AG04449 (cell line): ENCODE measurements at regions of chr16 and their contacts with region 1.

Region 1: DNA sequence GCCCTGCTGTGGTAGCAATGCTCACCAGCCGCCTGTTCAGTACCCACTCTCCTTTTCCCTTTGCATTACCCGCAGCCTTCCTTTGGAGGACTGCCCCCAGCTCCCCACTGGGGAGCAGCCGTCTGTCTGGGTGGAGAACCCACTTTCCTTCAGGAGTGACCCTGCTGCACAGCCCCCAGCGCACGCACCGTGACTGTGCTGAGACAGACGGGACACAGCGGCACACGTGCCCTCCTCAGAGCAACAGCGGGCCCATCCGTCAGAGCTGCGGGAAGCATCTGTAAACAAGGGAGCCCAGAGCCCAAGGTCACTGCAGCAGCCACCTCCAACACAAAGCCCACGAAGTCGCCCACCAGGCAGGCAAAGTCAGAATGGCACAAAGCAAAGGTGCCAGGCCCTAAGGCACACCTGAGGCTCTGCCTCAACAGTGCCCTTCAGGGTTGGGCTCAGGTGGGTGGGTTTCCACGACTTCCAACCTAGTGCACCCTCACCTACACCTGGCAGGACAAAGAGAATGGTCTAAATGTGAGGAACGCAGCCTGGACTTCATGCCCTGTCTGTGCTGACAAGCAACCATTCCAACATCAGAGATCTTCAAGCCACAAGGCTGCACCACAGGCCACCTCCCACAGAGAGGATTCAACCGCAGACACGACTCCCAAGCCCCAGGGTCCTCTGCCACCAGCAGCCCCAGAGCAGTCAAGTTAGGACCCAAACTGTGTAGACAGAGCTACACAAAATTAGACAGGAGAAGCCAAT is 9.9 kb downstream of the AXIN1 start:
- DNase-seq: no peak
- H3K4me3 ChIP-seq: no peak overlapping the region
- CTCF ChIP-seq: no peak

Region 2: DNA sequence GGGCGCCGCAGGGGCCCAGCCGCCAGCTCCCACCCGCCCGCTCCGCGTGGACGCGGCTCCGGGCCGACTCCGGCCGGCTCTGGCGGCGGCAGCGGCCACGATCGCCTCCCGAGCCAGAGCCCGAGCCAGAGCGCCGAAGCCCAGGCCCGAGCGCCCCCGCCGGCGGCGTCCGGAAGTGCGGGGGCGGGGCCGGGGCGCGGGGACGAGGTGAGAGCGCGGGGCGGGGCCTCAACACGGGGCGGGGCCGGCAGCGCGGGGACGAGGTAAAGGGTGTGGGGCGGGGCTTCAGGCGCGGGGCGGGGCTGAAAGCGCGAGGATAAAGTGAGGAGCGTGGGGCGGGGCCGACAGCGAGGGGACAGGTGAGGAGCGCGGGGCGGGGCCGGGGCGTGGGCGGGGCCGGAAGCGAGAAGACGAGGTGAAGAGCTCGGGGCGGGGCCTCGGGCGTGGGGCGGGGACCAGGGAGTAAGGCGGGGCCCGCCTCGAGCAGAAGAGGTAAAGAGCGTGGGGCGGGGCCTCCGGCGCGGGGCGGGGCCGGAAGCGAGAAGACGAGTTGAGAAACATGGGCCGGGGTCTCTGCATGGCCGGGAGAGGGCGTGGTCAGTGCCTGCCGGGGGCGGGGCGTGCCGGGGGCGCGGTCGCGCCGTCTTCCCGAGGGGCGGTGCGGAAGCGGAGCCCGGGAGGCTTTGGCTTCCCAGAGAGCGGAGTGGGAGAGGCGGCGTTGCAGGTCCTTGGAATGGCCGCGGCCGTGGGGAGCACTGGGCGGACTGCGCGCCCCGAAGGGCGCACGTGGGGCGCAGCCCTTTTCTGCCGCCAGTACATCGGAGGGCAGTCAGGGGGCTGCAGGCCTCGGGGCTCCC is 10.1 kb after region 1 on chr16 and contains the start of gene AXIN1:
- CTCF ChIA-PET with region 1: interaction called, 14 read pairs
- POLR2A ChIA-PET with region 1: no interaction called
- DNase-seq: no peak
- H3K4me3 ChIP-seq: peak within 1 kb of the TSS; percentile 73
- CTCF ChIP-seq: peak; percentile 52